ENCODE measurements at regions of chr3 and their contacts with region 1.

Region 1: GRCh38 chr3:122383771-122384697 is at the start of gene FAM162A:
- DNase-seq: peak; percentile 95
- H3K4me3 Mint-ChIP-seq: peak within 1 kb of the TSS; percentile 88
- H3K27ac Mint-ChIP-seq: peak within 1 kb of the TSS; percentile 86
- H3K4me1 Mint-ChIP-seq: peaks cover 53% of the 10 kb centered on the region
- H3K27me3 Mint-ChIP-seq: no peaks in the 10 kb centered on the region
- total RNA-seq, gene FAM162A: 74.5 to 77.5 TPM

Region 2: DNA sequence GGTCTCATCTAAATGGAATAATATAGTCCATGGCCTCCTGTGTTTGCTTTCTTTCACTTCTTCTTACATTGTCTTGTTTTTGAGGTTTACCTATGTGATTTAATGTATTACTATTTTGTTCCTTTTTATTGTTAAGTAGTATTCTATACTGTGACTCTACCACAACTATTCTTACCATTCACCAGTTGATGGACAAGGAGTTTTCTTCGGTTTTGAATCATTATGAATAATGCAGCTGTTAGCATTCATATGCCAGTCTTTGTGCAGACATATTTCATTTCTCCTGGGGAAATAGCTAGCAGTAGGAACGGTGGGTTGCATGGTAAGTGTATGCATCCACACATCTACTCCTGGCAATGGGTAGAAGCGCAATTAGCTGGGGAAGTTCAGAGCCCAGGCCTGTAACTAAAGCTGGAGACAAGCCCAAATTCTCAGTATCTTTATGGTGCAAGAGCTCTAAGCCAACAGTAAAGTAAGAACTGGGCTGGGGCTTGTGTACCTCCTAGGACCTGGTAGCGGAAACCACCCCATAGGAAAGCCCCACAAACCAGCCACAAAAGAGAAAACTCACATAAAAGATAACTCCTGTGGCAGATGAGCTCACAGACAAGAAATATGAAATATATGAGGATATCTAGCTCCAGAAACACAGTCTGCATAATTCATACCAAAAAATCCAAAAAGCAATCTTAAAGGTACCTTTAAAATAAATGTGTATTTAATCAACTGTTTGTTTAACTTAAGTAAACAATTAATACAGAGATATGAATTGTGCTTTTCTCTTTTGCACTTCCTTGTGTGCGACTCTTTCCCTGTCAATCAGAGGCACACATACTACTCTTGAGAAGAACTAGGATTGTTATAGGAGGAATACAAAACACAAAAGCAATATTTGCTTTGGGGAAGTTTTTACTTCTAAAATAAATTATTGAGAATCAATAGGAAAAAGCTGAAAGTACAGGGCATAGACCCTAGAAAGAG is 61.6 kb before region 1 on chr3:
- CTCF ChIA-PET with region 1: no interaction called
- POLR2A ChIA-PET with region 1: no interaction called
- DNase-seq: peak; percentile 43
- H3K4me3 Mint-ChIP-seq: no peak overlapping the region
- H3K27ac Mint-ChIP-seq: peak overlapping the region; percentile 48
- H3K4me1 Mint-ChIP-seq: peaks cover 32% of the 10 kb centered on the region
- H3K27me3 Mint-ChIP-seq: peaks cover 17% of the 10 kb centered on the region

Region 3: GRCh38 chr3:122365073-122365472 is 19.0 kb before region 1 on chr3:
- CTCF ChIA-PET with region 1: interaction called, 14 read pairs
- POLR2A ChIA-PET with region 1: interaction called, 9 read pairs
- DNase-seq: no peak
- H3K4me3 Mint-ChIP-seq: no peak overlapping the region
- H3K27ac Mint-ChIP-seq: peak overlapping the region; percentile 60
- H3K4me1 Mint-ChIP-seq: peaks cover 27% of the 10 kb centered on the region
- H3K27me3 Mint-ChIP-seq: no peaks in the 10 kb centered on the region

Region 4: DNA sequence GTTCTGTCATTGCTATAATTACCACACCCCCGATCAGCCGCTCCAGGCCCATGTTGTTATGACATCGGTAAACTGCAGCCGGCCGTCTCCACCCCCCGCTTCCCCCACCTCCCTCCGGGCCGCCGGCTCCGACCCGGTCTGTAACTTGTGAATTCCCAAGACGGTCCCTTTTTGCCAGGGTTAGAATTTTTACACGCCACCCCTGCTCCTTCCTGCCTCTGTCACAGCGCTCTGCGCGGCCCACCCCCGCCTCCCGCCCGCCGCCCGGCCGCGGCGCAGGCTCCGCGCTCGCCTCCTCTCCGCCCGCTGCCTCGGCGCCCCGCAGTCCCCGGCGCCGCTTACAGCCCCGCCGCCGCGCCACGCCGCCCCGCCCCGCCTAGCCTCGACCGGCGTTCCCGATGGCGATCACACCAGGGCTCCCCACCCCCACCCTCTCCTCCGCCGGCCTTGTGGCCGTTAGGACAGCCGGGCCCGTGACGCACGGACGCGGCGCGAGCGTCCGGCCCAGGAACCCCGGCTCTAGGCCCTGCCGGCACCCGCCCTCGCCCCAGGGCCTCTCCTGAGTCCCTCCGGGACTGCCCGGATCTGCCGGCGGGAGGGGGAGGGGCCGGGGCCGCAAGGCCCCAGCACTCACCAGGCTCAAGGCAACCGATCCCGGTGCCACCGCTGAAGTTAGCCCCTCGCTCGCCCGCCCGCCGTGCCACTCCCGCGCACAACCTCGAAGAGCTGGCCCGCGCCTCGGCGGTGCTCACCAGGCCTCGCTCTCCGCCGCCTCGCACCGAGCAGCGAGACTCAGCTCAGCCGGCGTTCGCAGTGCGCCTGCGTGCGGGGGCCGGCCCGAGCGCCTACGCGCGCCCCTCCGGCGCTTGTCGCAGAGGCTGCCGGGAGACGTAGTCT is 130.3 kb after region 1 on chr3 and contains the start of gene KPNA1:
- CTCF ChIA-PET with region 1: interaction called, 4 read pairs
- POLR2A ChIA-PET with region 1: interaction called, 18 read pairs
- DNase-seq: peak; percentile 89
- H3K4me3 Mint-ChIP-seq: peak within 1 kb of the TSS; percentile 78
- H3K27ac Mint-ChIP-seq: peak within 1 kb of the TSS; percentile 77
- H3K4me1 Mint-ChIP-seq: peaks cover 28% of the 10 kb centered on the region
- H3K27me3 Mint-ChIP-seq: peaks cover 5% of the 10 kb centered on the region
- total RNA-seq, gene KPNA1: 41.8 to 45.8 TPM

Region 5: DNA sequence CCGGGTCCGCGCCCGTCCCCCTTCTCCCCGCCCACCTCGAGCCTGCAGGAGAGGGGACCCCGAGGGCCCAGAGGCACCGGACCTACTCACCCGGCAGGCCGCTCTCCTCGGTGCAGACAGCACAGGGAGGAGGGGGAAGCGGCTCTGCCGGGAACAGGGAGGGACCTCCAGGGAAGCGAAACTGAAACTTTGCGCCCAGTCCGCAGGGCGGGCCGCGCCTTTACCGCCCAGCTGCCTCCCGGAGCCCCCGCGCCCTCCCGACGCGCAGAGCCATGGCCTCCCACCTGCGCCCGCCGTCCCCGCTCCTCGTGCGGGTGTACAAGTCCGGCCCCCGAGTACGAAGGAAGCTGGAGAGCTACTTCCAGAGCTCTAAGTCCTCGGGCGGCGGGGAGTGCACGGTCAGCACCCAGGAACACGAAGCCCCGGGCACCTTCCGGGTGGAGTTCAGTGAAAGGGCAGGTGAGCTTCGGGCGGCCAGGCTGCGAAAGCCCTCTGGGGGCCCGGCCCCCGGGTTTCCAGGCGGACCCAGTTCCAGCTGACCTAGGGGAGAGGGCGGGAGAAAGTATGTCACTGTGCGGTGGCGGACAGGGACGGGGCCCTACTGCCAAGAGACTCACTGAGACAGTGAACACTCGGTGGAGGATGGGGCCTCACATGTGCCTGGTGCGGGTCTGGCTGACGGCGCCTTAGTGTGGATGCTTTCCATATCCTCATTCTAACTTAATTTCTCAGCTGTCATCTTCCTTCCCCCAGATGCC is 180.3 kb after region 1 on chr3 and contains the starts of genes DTX3L and PARP9:
- CTCF ChIA-PET with region 1: interaction called, 5 read pairs
- POLR2A ChIA-PET with region 1: interaction called, 13 read pairs
- DNase-seq: peak; percentile 91
- H3K4me3 Mint-ChIP-seq: peak within 1 kb of the TSS; percentile 98
- H3K27ac Mint-ChIP-seq: peak within 1 kb of the TSS; percentile 98
- H3K4me1 Mint-ChIP-seq: peaks cover 74% of the 10 kb centered on the region
- H3K27me3 Mint-ChIP-seq: no peaks in the 10 kb centered on the region
- total RNA-seq, gene DTX3L: 135 to 144 TPM
- total RNA-seq, gene PARP9: 151 to 157 TPM

Region 6: DNA sequence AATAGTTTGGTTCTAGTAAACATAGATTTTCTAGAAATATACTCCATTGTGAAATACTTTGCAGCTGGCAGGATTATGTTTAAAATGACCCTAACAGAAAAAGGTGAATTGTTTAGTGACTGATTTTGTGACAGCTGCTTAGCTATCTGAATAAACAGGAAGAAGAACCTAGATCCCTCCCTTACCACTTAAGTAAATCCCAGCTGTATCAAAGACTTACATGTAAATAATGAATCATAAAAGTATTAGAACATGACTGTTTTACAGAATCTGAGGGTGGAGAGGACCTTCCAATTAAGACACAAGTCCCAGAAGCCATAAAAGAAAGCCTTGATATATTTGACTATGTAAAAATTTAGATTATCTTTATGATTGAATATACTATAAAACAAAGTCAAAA is 426.7 kb after region 1 on chr3:
- CTCF ChIA-PET with region 1: no interaction called
- POLR2A ChIA-PET with region 1: no interaction called
- DNase-seq: no peak
- H3K4me3 Mint-ChIP-seq: no peak overlapping the region
- H3K27ac Mint-ChIP-seq: no peak overlapping the region
- H3K4me1 Mint-ChIP-seq: no peaks in the 10 kb centered on the region
- H3K27me3 Mint-ChIP-seq: no peaks in the 10 kb centered on the region